Caco-2 (cell line): ENCODE measurements at regions of chr3 and their contacts with region 1.

Region 1: DNA sequence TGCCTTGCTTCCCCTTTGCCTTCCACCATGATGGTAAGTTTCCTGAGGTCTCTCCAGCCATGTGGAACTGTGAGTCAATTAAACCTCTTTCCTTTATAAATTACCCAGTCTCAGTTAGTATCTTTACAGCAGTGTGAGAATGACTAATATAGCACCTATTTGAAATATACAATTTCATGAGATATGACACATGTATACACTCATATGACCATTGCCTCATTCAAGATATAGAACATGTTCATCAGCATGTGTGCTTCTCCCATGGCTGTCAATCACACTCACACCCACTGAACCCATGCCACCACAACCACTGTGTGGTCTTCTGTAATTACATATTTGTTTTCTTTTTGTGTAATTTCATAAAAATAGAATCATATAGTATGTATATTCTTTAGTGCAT is 599.5 kb upstream of the EPHA6 start:
- DNase-seq: no peak
- H3K4me3 ChIP-seq: no peak overlapping the region
- H3K4me3 Mint-ChIP-seq: no peak overlapping the region
- H3K27ac Mint-ChIP-seq: peak overlapping the region; percentile 7
- H3K4me1 ChIP-seq: no peaks in the 10 kb centered on the region
- H3K4me1 Mint-ChIP-seq: no peaks in the 10 kb centered on the region
- H3K27me3 ChIP-seq: no peaks in the 10 kb centered on the region
- H3K27me3 Mint-ChIP-seq: no peaks in the 10 kb centered on the region
- CTCF ChIP-seq: no peak

Region 2: DNA sequence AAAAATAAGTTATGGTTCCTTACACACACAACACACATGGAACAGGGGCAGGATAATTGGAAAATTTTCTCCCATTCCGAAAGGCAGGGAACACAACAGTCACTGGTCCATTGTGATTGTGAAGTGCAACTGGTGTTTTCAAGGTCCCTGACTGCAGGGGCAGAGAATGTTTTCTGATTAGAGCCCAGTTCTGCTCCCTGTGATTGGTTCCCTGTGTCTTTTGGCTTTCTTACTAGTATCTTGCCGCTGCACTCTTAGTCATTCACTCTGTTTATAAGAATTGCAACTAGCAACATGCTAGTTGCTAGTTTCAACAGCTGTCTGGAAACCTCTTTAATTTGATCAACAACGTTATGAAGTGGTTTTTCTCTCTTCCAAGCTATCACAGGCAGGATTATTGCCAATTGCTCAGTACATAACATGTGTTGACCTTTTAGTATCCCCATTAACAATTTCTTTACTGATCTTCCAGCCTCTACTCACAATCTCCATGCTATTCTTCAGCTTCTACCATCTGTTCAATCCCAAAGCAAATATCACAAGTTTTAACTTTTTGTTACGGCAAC is 776.9 kb after region 1 on chr3:
- CTCF ChIA-PET with region 1: no interaction called
- POLR2A ChIA-PET with region 1: no interaction called
- intact Hi-C with region 1: loop called (anchors 5 kb)
- DNase-seq: no peak
- H3K4me3 ChIP-seq: no peak overlapping the region
- H3K4me3 Mint-ChIP-seq: no peak overlapping the region
- H3K27ac Mint-ChIP-seq: no peak overlapping the region
- H3K4me1 ChIP-seq: peaks cover 3% of the 10 kb centered on the region; the same call in 1 of the 2 replicates
- H3K4me1 Mint-ChIP-seq: no peaks in the 10 kb centered on the region
- H3K27me3 ChIP-seq: no peaks in the 10 kb centered on the region
- H3K27me3 Mint-ChIP-seq: no peaks in the 10 kb centered on the region
- CTCF ChIP-seq: no peak